BJ (cell line): ENCODE measurements at regions of chr13 and their contacts with region 1.

Region 1: GRCh38 chr13:42991892-42992763 is at the start of gene EPSTI1:
- DNase-seq: no peak
- H3K4me3 ChIP-seq: peak within 1 kb of the TSS; percentile 50
- H3K27me3 ChIP-seq: no peaks in the 10 kb centered on the region
- CTCF ChIP-seq: no peak
- polyA plus RNA-seq, gene EPSTI1: 2.5 and 4.5 TPM in 2 replicates

Region 2: DNA sequence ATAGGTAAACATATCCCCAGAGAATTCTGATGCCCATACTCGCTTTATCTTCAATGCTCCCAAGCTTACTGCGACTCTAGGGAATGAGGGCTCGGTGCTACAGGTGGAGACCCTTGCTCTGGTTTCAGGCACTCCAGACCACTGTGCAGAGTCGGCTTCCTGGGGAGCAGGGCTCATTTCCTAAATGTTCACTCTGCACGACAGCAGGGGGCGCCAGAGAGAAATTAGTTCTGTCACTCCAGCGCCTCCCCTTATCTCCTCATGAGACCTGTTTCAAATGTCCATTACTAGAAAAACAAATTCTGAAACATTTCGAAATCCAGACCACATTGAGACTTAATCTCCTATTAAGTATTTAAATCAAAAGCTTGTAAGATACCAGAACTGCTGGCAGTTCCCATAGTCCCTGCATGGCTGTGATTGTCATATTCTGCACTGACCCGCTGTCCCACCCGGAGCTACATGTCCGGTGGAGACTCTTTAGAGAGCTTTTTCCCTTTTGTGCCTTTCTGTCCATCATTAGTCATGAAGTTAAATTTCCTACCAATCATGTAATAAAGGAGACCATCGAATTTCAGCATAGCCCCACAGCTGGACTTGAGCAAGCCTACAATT is 22.5 kb before region 1 on chr13:
- CTCF ChIA-PET with region 1: interaction called, 18 read pairs
- POLR2A ChIA-PET with region 1: no interaction called
- DNase-seq: no peak
- H3K4me3 ChIP-seq: no peak overlapping the region
- H3K27me3 ChIP-seq: no peaks in the 10 kb centered on the region
- CTCF ChIP-seq: peak; percentile 79